AG04449 (cell line): ENCODE measurements at regions of chr6 and their contacts with region 1.

Region 1: GRCh38 chr6:117829594-117830319 is 77.3 kb upstream of the SLC35F1 start:
- DNase-seq: no peak
- H3K4me3 ChIP-seq: peak overlapping the region; percentile 43
- CTCF ChIP-seq: no peak

Region 2: GRCh38 chr6:117346142-117346930 is 483.4 kb before region 1 on chr6:
- CTCF ChIA-PET with region 1: interaction called, 20 read pairs
- POLR2A ChIA-PET with region 1: no interaction called
- DNase-seq: no peak
- H3K4me3 ChIP-seq: no peak overlapping the region; the same call in 1 of the 2 replicates
- CTCF ChIP-seq: no peak

Region 3: DNA sequence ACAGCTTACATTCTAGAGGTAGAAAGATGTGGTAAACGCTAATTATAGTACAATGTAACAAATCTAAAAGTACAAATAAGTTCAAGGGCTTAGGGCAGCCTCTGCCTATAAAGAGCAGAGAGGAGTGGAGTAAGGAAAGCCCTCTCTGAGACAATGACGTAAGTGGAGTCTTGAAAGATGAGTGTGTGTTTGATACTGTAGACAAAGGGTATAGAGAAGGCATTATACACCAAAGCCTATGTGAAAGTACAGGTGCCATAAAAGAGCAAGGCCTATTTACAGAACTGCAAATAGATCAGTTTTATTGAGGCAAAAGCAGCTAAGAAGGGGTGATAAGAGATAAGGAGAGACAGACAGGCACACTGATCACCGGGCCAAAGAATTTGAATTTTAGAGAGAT is 238.4 kb before region 1 on chr6:
- CTCF ChIA-PET with region 1: no interaction called
- POLR2A ChIA-PET with region 1: no interaction called
- DNase-seq: no peak
- H3K4me3 ChIP-seq: no peak overlapping the region
- CTCF ChIP-seq: no peak